Heart right ventricle (tissue), 16 donors: ENCODE measurements at regions of chr3 and their contacts with region 1.

Region 1: DNA sequence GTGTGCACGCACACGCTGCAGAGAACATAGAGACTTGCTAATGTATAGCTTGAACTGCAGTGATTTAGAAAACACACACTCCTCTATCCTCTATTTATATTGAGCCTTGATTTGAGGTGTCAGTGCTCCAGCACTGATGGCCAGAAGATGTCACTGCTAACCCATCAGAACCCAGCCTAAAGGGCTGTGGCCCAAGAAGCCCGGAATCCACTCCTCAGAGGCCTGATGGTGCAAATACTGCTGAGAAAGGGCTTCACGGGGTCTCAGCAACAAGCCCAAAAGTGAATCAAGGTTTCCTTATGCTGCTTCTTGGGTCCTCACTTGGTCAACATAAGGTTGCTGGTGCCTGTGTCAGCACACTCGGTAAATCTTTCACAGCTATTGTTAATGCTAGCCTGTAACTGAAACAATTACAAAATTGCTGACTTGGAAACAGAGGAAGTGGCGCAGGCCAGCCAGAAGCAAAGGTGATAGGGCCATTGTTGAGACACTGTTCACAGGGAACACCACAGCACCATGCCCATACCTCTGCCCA is 60.3 kb downstream of the HEG1 start:
- DNase-seq: peak; percentile 39 to 52
- ATAC-seq: peak; percentile 54 to 80 (median 72)
- H3K4me3 ChIP-seq: no peak overlapping the region
- H3K27ac ChIP-seq: peak overlapping the region in 9 of 10 donors; percentile 5 to 84 (median 54)
- H3K4me1 ChIP-seq: peaks cover 21 to 81% (median 57%) of the 10 kb centered on the region in 9 donors
- H3K27me3 ChIP-seq: no peaks in the 10 kb centered on the region
- CTCF ChIP-seq: peak; percentile 50 to 83 (median 72)

Region 2: DNA sequence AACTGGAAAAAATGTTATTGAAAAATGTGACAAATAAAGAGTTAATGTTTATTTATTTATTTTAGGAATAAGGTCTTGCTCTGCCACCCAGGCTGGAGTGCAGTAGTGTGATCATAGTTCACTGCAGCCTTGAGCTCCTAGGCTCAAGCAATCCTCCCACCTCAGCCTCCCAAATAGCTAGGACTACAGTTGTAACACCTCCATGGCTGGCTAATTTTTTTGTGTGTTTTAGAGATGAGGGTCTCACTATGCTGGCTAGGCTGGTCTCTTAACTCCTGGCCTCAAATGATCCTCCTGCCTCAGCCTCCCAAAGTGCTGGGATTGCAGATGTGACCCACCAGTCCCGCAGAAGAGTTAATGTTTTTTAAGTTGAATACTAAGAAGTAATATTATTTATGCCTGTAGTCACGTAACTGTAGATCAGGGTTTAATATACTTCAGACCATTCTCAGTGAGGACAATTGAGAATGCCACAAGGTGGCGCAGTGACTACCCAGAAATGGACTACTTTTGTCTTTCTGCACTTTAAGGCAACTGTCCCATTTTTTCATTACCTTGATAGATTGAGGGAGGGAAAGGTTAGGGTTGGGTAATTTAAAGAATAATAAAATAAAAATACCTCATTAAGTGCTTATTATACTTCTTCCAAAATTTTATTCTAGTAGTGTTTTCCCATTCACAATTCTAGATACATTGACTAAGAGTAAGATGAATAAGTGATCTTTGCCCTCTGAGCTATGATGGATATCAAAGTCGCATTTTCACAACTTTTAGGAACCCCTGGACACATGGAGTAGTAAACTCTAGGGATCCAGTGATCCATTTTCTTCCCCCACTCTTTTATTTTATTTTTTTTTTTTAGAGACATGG is 67.0 kb before region 1 on chr3:
- intact Hi-C with region 1: loop called in 1 of 10 experiments (anchors 5 kb)
- DNase-seq: peak; percentile 31 to 68
- ATAC-seq: peak in 7 of 8 donors; percentile 42 to 84 (median 68)
- H3K4me3 ChIP-seq: no peak overlapping the region
- H3K27ac ChIP-seq: no peak overlapping the region
- H3K4me1 ChIP-seq: peaks cover 0 to 13% (median 0%) of the 10 kb centered on the region in 9 donors
- H3K27me3 ChIP-seq: no peaks in the 10 kb centered on the region
- CTCF ChIP-seq: peak; percentile 57 to 85 (median 77)

Region 3: GRCh38 chr3:125062888-125063618 is 67.5 kb after region 1 on chr3:
- intact Hi-C with region 1: loop called in 3 of 10 experiments (anchors 5 to 10 kb)
- DNase-seq: peak; percentile 33 to 41
- ATAC-seq: peak; percentile 7 to 82 (median 45)
- H3K4me3 ChIP-seq: no peak overlapping the region
- H3K27ac ChIP-seq: peak overlapping the region in 9 of 10 donors; percentile 20 to 89 (median 85)
- H3K4me1 ChIP-seq: peaks cover 15 to 59% (median 44%) of the 10 kb centered on the region in 9 donors
- H3K27me3 ChIP-seq: no peaks in the 10 kb centered on the region
- CTCF ChIP-seq: no peak

Region 4: GRCh38 chr3:125148836-125149235 is 153.3 kb after region 1 on chr3:
- intact Hi-C with region 1: loop called in 3 of 10 experiments (anchors 5 kb)
- DNase-seq: peak; percentile 62 to 68
- ATAC-seq: peak; percentile 34 to 82 (median 69)
- H3K4me3 ChIP-seq: no peak overlapping the region
- H3K27ac ChIP-seq: peak overlapping the region in 4 of 10 donors; percentile 8 to 92 (median 44)
- H3K4me1 ChIP-seq: peaks cover 21 to 81% (median 64%) of the 10 kb centered on the region in 9 donors
- H3K27me3 ChIP-seq: no peaks in the 10 kb centered on the region
- CTCF ChIP-seq: no peak

Region 5: GRCh38 chr3:125374996-125375941 is 379.7 kb after region 1 on chr3 and contains the start of gene ZNF148:
- intact Hi-C with region 1: loop called in 1 of 10 experiments (anchors 5 kb)
- DNase-seq: peak; percentile 92 to 93
- ATAC-seq: peak; percentile 98 to 99 (median 99)
- H3K4me3 ChIP-seq: peak within 1 kb of the TSS; percentile 63 to 88 (median 72)
- H3K27ac ChIP-seq: peak within 1 kb of the TSS; percentile 59 to 98 (median 94)
- H3K4me1 ChIP-seq: peaks cover 9 to 40% (median 23%) of the 10 kb centered on the region in 9 donors
- H3K27me3 ChIP-seq: no peaks in the 10 kb centered on the region
- CTCF ChIP-seq: peak in 4 of 9 donors; percentile 9 to 31 (median 14)
- total RNA-seq, gene ZNF148: 33.5 to 59.6 (median 46.1) TPM